H1 (cell line): ENCODE measurements at regions of chr12 and their contacts with region 1.

Region 1: GRCh38 chr12:76685246-76685678 is 78.7 kb upstream of the ZDHHC17 start:
- DNase-seq: no peak
- H3K4me3 ChIP-seq: no peak overlapping the region
- H3K27ac ChIP-seq: no peak overlapping the region
- H3K4me1 ChIP-seq: no peaks in the 10 kb centered on the region; a peak in 3 of 7 replicates
- H3K27me3 ChIP-seq: no peaks in the 10 kb centered on the region
- CTCF ChIP-seq: no peak
- EP300 ChIP-seq: no peak
- POLR2A ChIP-seq: no peak
- RAD21 ChIP-seq: no peak

Region 2: DNA sequence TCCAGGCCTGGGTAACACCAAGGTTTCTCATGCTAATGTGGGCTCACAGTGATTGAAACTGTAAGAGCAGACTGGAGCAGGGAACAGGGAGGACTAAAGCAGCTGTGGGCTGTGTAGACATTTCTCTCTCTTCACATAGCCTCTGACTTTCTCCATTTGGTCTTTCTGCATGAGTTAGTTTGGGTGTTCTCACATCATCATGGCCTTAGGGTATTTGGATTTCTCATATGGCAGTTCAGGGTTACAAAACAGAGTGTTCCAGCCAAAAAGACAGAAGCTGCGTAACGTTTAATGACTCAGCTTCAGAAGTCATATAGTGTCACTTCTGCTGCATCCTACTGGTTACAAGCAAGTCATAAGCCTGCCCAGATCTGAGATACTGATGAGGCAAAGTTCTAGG is 73.7 kb before region 1 on chr12:
- CTCF ChIA-PET with region 1: no interaction called
- POLR2A ChIA-PET with region 1: no interaction called
- DNase-seq: no peak
- H3K4me3 ChIP-seq: no peak overlapping the region
- H3K27ac ChIP-seq: no peak overlapping the region
- H3K4me1 ChIP-seq: no peaks in the 10 kb centered on the region; a peak in 2 of 7 replicates
- H3K27me3 ChIP-seq: no peaks in the 10 kb centered on the region
- CTCF ChIP-seq: no peak
- EP300 ChIP-seq: no peak
- POLR2A ChIP-seq: no peak
- RAD21 ChIP-seq: no peak

Region 3: DNA sequence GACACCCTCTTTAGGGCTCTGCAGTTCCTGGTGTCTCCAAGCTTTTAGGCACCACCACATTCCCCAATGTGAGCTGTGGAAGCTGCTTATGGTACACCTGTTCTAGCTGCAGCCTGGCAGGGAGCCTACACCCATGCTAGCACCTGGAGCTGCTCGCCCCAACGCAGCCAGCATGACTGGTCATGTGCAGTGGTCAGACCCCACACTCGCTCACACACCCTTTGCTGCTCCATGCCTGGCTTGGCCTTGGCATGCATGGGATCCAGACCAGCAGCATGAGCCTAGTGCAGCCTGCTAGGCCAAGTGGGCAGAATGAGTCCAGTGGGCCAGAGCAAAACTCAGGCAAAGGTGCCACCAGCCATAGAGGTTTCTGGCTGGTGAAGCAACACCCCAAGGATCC is 39.3 kb before region 1 on chr12:
- CTCF ChIA-PET with region 1: interaction called, 10 read pairs
- POLR2A ChIA-PET with region 1: no interaction called
- DNase-seq: no peak
- H3K4me3 ChIP-seq: no peak overlapping the region
- H3K27ac ChIP-seq: no peak overlapping the region
- H3K4me1 ChIP-seq: no peaks in the 10 kb centered on the region
- H3K27me3 ChIP-seq: no peaks in the 10 kb centered on the region
- CTCF ChIP-seq: no peak
- EP300 ChIP-seq: no peak
- POLR2A ChIP-seq: no peak
- RAD21 ChIP-seq: no peak

Region 4: DNA sequence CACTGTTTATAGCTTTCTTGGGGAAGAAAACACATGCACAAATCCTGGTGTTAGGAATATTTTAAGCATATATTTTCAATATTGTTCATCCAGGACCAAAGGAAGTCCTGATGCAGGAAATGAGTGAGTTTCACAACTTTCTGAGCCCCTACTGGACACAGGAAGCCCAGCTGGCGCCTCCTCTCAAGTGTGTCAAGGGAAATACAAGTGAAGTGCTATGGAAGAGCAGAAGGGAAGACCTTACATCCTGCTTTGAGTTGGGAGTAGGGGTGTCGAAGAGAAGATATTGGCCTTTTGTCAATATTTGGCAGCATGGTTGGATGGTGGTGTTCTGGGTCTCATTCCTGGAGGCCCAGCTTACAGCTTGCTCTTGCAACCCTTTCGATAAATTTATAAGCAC is 12.6 kb after region 1 on chr12:
- CTCF ChIA-PET with region 1: interaction called, 42 read pairs
- POLR2A ChIA-PET with region 1: interaction called, 4 read pairs
- DNase-seq: no peak
- H3K4me3 ChIP-seq: no peak overlapping the region
- H3K27ac ChIP-seq: no peak overlapping the region
- H3K4me1 ChIP-seq: peaks cover 5 to 12% (median 6%) of the 10 kb centered on the region in 4 experiments; a peak in 6 of 7 replicates
- H3K27me3 ChIP-seq: no peaks in the 10 kb centered on the region
- CTCF ChIP-seq: no peak
- EP300 ChIP-seq: no peak
- POLR2A ChIP-seq: no peak
- RAD21 ChIP-seq: no peak; a peak in 1 of 4 replicates

Region 5: DNA sequence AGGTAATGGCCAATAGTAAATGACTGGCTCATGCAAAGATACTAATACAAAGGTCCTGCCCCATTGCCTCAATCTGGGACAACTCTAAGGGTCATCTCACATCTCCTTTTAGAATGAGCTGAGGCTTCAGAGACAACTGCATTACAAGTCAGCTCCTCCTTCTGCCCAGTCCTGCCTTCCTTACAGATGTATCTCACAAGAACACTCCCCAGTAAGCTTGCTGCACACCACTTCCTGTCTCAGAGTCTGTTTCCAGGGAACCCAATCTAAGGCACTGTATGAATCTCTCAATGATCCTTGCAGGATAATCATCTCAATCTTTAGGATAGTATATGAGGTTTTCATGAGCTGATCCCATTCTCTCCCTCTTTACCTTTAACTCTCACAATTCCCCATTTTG is 20.8 kb after region 1 on chr12:
- CTCF ChIA-PET with region 1: interaction called, 42 read pairs
- POLR2A ChIA-PET with region 1: no interaction called
- DNase-seq: no peak
- H3K4me3 ChIP-seq: no peak overlapping the region
- H3K27ac ChIP-seq: no peak overlapping the region
- H3K4me1 ChIP-seq: peaks cover 0 to 2% (median 0%) of the 10 kb centered on the region in 4 experiments; a peak in 1 of 7 replicates
- H3K27me3 ChIP-seq: no peaks in the 10 kb centered on the region
- CTCF ChIP-seq: no peak
- EP300 ChIP-seq: no peak
- POLR2A ChIP-seq: no peak
- RAD21 ChIP-seq: no peak

Region 6: DNA sequence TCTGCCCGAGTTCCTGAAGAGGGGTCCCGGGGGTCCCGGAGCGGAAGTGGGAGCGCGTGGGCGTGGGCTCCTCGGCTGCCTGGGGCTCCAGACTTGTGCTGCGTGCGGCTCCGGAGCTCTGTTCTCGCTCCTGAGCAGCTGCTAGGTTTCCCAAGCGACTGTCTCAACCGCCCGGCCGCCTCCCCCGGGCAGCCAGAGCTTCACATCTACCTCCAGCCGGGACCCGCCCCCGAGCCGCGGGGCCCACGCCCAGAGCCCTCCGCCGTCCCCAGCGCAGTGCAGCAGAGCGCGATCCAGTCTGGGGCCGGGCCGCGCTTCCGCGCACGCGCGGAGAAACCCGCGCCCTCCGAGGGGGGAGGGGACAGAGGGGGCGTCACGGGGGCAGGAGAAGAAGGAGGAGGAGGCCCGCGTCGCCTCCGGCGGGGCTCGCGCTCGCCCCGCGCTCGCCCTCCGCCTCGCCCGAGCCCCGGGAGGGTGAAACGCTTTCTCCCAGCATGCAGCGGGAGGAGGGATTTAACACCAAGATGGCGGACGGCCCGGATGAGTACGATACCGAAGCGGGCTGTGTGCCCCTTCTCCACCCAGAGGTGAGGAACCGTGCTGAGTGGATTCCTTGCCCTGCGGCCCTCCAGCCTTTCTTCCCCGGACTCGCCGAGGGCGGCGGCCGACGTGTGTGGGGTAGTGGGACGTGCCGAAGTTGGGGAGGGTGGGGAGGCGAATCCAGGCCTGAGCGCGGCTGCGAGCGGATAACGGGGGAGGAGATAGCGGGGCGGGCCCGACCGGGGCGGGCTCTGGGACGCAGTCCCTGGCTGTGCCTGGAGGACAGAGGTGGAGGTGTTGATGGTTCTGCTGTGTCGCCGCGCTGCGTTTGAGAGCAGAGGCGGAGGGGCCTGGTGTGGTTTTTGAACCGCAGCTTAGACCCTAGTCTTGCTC is 78.7 kb after region 1 on chr12 and contains the start of gene ZDHHC17:
- CTCF ChIA-PET with region 1: interaction called, 6 read pairs
- POLR2A ChIA-PET with region 1: interaction called, 10 read pairs
- DNase-seq: peak; percentile 77 to 92
- H3K4me3 ChIP-seq: peak within 1 kb of the TSS; percentile 82 to 98 (median 94)
- H3K27ac ChIP-seq: peak within 1 kb of the TSS; percentile 100
- H3K4me1 ChIP-seq: peaks cover 2 to 14% (median 7%) of the 10 kb centered on the region in 4 experiments; a peak in 6 of 7 replicates
- H3K27me3 ChIP-seq: no peaks in the 10 kb centered on the region
- CTCF ChIP-seq: no peak
- EP300 ChIP-seq: no peak
- POLR2A ChIP-seq: peak; percentile 48 to 94
- RAD21 ChIP-seq: peak in 1 of 2 experiments; percentile 1; a peak in 1 of 4 replicates
- total RNA-seq, gene ZDHHC17: 27.6 and 32.1 TPM in 2 replicates